ENCODE measurements at regions of chr2 and their contacts with region 1.

Region 1: DNA sequence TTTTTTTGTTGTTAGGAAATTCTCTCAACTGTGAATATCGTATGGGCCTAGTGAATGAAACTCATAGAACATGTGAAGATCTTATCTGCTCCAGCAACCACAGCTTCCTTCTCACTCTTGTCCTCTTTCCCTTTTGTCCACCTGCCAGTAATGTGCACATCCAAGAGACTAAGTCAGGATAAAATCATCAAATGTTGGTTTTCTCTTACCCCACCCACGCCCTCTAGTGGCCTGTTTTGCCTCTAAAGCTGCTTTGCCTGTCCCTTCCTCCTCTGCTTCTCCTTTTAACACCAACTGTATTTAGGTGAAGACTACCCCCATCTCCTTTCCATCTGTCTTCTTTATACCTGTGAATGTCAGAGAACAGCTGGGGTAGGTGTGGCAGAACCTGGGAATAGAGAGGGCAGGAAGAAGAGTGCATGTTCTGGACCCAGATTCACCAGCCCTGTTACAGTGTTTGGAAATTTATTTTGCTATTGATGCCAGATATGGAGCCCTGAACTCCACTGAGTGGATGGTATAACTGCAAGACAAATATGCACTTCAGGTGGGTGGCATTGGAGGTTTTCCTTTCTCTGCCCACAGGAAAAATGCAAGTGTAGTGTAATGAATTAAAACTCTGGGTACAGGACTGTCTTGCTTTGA is 8.4 kb upstream of the MGAT5 start:
- DNase-seq: peak; percentile 56 to 86 (median 78)
- ATAC-seq: peak; percentile 59
- H3K4me3 ChIP-seq: peak overlapping the region in 1 of 2 experiments; percentile 4
- H3K4me3 Mint-ChIP-seq: peak overlapping the region; percentile 0
- H3K27ac ChIP-seq: no peak overlapping the region
- H3K27ac Mint-ChIP-seq: peak overlapping the region; percentile 49
- H3K4me1 ChIP-seq: peaks cover 58% of the 10 kb centered on the region
- H3K4me1 Mint-ChIP-seq: peaks cover 88% of the 10 kb centered on the region
- H3K27me3 ChIP-seq: no peaks in the 10 kb centered on the region
- H3K27me3 Mint-ChIP-seq: no peaks in the 10 kb centered on the region
- CTCF ChIP-seq: peak; percentile 85

Region 2: DNA sequence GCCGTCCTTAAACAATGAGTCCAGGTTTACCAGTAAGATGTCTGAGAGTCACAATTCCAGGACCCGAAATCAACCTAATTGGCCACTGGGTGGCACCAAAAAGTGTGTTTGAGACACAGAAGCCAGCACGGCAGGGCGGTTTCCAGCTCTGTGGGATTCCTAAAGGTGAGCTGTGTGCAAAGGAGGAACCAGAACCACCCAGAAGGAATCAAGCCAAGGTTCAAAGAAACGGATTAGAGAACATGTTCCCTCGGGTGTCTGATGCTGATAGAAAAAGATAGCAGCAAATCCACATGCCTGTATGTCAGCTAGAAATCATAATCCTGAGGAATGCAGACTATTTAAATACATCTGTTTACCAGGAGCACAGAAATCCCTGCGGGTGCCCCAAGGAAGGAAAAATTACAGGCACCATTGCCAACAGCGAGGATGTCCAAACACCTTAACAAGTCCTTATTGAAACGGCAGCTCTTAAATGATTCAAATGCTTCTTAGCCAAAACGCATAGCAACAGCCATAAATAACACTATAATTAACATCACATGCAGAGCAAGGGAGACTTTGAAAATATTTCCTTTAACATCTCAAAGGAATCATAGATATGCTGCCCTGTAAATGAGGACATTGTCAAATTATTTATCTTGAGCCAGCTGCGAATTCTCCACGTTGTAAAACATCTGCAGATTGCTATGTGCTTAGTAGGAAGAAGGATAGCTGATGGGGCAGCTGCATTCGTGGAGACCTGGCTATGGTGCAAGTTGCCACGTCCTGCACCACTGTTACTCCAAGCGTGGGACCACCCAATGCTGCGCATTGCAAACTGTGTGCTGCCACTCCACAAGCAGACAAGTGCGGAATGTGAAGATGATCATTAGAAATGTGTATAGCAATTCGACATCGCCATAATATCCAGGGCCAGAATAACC is 358.5 kb before region 1 on chr2:
- CTCF ChIA-PET with region 1: interaction called, 5 read pairs
- POLR2A ChIA-PET with region 1: no interaction called
- intact Hi-C with region 1: loop called in 1 of 2 experiments (anchors 2 kb)
- DNase-seq: peak; percentile 4 to 61 (median 48)
- ATAC-seq: no peak
- H3K4me3 ChIP-seq: no peak overlapping the region
- H3K4me3 Mint-ChIP-seq: no peak overlapping the region
- H3K27ac ChIP-seq: no peak overlapping the region
- H3K27ac Mint-ChIP-seq: no peak overlapping the region
- H3K4me1 ChIP-seq: no peaks in the 10 kb centered on the region
- H3K4me1 Mint-ChIP-seq: peaks cover 2% of the 10 kb centered on the region
- H3K27me3 ChIP-seq: no peaks in the 10 kb centered on the region
- H3K27me3 Mint-ChIP-seq: peaks cover 4% of the 10 kb centered on the region
- CTCF ChIP-seq: peak; percentile 46

Region 3: DNA sequence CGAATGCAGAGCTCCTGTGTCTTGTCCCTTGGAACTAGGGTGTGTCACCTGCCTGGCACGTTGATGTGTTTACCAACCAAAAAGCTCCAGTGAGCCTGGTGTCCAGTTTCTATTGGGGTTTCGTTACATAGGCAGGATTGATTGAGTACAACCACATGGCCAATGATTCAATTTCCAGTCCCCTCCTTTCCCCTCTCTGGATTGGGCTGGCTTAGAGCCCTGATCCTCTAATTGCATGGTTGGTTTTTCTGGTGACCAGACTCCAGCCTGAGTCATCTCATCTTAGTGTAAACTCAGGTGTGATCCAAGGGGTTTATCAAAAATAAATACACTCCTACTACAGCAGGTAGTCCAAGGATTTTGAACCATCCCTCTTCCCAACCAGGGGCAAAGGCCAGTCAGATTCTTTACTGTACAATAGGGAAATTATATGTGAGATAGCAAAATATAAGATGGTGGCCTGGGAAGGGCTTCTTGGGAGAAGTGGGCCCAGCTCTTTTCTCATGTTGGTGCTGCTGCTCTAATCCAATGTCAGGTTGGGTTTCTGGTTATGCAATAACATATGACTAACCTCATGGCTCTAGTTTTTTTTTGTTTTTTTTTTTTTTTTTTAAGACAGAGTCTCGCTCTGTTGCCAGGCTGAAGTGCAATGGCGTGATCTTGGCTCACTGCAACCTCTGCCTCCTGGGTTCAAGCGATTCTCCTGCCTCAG is 56.3 kb before region 1 on chr2:
- CTCF ChIA-PET with region 1: no interaction called
- POLR2A ChIA-PET with region 1: no interaction called
- intact Hi-C with region 1: no loop called
- DNase-seq: no peak
- ATAC-seq: peak; percentile 34
- H3K4me3 ChIP-seq: no peak overlapping the region
- H3K4me3 Mint-ChIP-seq: no peak overlapping the region
- H3K27ac ChIP-seq: no peak overlapping the region
- H3K27ac Mint-ChIP-seq: no peak overlapping the region
- H3K4me1 ChIP-seq: peaks cover 18% of the 10 kb centered on the region
- H3K4me1 Mint-ChIP-seq: peaks cover 63% of the 10 kb centered on the region
- H3K27me3 ChIP-seq: no peaks in the 10 kb centered on the region
- H3K27me3 Mint-ChIP-seq: no peaks in the 10 kb centered on the region
- CTCF ChIP-seq: no peak

Region 4: DNA sequence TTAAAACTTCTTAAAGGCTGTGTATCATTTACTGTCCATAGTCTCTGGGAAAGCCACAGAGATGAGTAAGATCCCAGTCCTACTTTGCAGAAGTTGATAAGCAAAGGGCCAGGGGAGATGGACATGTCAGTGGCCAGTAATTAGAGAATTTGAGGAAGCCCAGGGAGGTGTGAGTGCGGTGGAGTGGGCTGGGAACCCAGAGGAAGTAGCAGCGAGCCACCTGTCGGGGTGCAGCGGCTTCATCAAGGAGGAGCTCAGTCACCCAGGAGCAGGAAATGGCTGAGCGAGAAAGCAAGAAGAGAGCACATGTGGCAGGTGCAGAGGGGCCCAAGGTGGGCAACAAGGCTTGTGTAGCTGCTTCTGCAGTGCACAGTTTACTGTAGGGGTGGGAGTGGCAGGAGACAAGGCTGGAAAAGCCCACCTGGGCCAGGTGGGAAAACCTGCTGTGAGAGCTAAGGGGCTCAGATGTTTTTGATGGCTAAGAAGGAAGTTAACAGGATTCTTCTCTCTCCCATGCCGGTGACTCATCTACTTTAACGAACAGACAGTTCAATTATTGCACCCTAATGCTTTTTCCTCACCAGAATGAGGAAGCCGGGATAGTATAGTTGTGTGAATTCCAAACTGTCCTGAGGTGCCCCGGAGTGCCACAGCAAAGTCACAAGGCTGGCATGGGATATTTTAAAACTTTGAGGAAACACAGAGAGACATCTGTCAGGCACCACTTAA is 26.4 kb before region 1 on chr2:
- CTCF ChIA-PET with region 1: interaction called, 22 read pairs
- POLR2A ChIA-PET with region 1: interaction called, 5 read pairs
- intact Hi-C with region 1: no loop called
- DNase-seq: peak in 8 of 9 experiments; percentile 14 to 70 (median 56)
- ATAC-seq: peak; percentile 51
- H3K4me3 ChIP-seq: peak overlapping the region in 1 of 2 experiments; percentile 18
- H3K4me3 Mint-ChIP-seq: peak overlapping the region; percentile 72
- H3K27ac ChIP-seq: peak overlapping the region in 1 of 2 experiments; percentile 58
- H3K27ac Mint-ChIP-seq: peak overlapping the region; percentile 93
- H3K4me1 ChIP-seq: peaks cover 45% of the 10 kb centered on the region
- H3K4me1 Mint-ChIP-seq: peaks cover 68% of the 10 kb centered on the region
- H3K27me3 ChIP-seq: no peaks in the 10 kb centered on the region
- H3K27me3 Mint-ChIP-seq: no peaks in the 10 kb centered on the region
- CTCF ChIP-seq: no peak

Region 5: GRCh38 chr2:134261398-134262131 is 16.1 kb after region 1 on chr2:
- CTCF ChIA-PET with region 1: interaction called, 38 read pairs
- POLR2A ChIA-PET with region 1: interaction called, 6 read pairs
- intact Hi-C with region 1: loop called (anchors 1 to 2 kb)
- DNase-seq: no peak
- ATAC-seq: no peak
- H3K4me3 ChIP-seq: no peak overlapping the region
- H3K4me3 Mint-ChIP-seq: no peak overlapping the region
- H3K27ac ChIP-seq: no peak overlapping the region
- H3K27ac Mint-ChIP-seq: peak overlapping the region; percentile 24
- H3K4me1 ChIP-seq: peaks cover 71% of the 10 kb centered on the region
- H3K4me1 Mint-ChIP-seq: peaks cover 78% of the 10 kb centered on the region
- H3K27me3 ChIP-seq: peaks cover 0 to 3% of the 10 kb centered on the region in 2 experiments
- H3K27me3 Mint-ChIP-seq: no peaks in the 10 kb centered on the region
- CTCF ChIP-seq: no peak

Region 6: DNA sequence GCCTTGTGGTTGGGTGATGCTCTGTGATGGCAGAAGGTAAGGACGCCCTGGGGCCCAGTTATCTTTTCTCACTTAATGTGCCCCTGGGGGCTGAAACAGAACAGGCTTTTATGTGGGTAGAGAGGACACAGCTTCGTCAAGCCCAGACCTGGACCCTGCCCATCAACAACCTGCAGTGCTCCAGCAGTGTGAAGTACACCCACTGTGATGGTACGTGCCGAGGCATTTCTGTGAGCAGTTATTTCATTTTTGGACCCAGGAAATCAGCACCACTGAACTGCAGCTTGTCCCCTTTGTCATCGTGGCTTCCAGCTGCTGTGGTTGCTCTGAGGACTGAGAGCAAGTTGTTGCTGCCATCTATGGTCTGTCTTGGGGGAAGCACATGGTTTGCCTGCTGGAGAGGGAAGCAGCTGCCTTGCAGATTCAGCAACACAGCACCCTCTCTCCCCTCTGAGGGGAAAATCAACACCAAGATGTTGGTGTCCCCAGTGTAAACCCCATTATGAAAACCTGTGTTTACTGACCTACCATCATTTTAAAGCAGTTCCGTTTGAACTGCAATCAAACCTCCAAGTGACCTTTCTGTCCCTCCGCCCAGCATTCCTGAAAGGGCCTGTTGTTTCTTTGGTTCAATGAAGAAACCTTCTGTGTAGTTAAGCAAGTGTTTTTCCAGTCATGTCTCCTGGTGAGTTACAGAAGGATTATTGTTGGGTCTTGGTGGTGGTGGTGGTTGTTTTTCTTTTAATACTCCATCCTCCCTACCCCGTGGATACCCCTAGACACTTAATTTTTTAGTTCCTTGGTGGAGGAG is 166.6 kb after region 1 on chr2:
- CTCF ChIA-PET with region 1: interaction called, 34 read pairs
- POLR2A ChIA-PET with region 1: interaction called, 3 read pairs
- intact Hi-C with region 1: loop called (anchors 1 to 2 kb)
- DNase-seq: peak; percentile 41 to 83 (median 68)
- ATAC-seq: peak; percentile 95
- H3K4me3 ChIP-seq: no peak overlapping the region
- H3K4me3 Mint-ChIP-seq: no peak overlapping the region
- H3K27ac ChIP-seq: no peak overlapping the region
- H3K27ac Mint-ChIP-seq: peak overlapping the region; percentile 19
- H3K4me1 ChIP-seq: peaks cover 6% of the 10 kb centered on the region
- H3K4me1 Mint-ChIP-seq: peaks cover 48% of the 10 kb centered on the region
- H3K27me3 ChIP-seq: no peaks in the 10 kb centered on the region
- H3K27me3 Mint-ChIP-seq: no peaks in the 10 kb centered on the region
- CTCF ChIP-seq: peak; percentile 67